ENCODE measurements at regions of chr15 and their contacts with region 1.

Region 1: GRCh38 chr15:40421246-40422157 is 15.9 kb downstream of the IVD start:
- DNase-seq: peak; percentile 59 to 84 (median 73)
- ATAC-seq: peak; percentile 97
- H3K4me3 ChIP-seq: peak overlapping the region; percentile 19
- H3K4me3 Mint-ChIP-seq: peak overlapping the region in 1 of 10 donors; percentile 4
- H3K27ac ChIP-seq: no peak overlapping the region
- H3K27ac Mint-ChIP-seq: peak overlapping the region in 1 of 9 donors; percentile 32
- H3K4me1 ChIP-seq: peaks cover 0 to 3% of the 10 kb centered on the region in 2 donors
- H3K4me1 Mint-ChIP-seq: peaks cover 0 to 7% (median 0%) of the 10 kb centered on the region in 7 donors
- H3K27me3 ChIP-seq: no peaks in the 10 kb centered on the region
- H3K27me3 Mint-ChIP-seq: no peaks in the 10 kb centered on the region

Region 2: DNA sequence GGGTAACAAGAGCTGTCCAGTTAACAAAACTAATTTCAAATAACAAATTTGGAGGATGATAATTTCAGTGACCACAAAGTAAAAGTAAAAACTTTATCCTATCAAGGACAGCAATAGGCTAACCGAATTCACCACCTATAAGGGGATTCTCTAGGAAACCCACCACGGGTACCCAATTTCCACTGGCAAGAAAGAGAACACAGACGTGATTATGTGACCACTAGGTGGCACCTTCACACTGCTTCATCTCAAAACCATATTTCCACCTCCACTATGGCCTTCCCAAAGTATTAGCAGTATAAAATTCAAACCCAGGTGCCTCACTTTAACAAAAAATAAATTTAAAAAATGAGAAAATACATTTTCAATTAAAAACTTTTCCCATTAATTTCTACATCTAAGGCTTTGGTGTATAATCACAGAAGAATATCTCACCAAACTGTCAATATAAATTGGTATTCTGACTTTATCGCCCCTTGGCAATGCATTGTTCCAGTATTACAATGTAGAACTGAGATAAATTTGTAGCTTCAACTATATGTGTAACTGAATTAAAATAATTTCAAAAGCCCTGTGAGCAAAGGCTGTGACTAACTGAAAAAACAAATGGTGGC is 735.4 kb before region 1 on chr15:
- CTCF ChIA-PET with region 1: no interaction called
- POLR2A ChIA-PET with region 1: no interaction called
- intact Hi-C with region 1: loop called in 1 of 2 experiments (anchors 5 kb)
- DNase-seq: peak in 6 of 9 donors; percentile 10 to 43 (median 33)
- ATAC-seq: peak; percentile 51
- H3K4me3 ChIP-seq: no peak overlapping the region
- H3K4me3 Mint-ChIP-seq: no peak overlapping the region
- H3K27ac ChIP-seq: no peak overlapping the region
- H3K27ac Mint-ChIP-seq: no peak overlapping the region
- H3K4me1 ChIP-seq: no peaks in the 10 kb centered on the region
- H3K4me1 Mint-ChIP-seq: peaks cover 0 to 5% (median 0%) of the 10 kb centered on the region in 7 donors
- H3K27me3 ChIP-seq: no peaks in the 10 kb centered on the region
- H3K27me3 Mint-ChIP-seq: peaks cover 0 to 15% (median 0%) of the 10 kb centered on the region in 5 donors

Region 3: GRCh38 chr15:40274350-40275274 is 146.9 kb before region 1 on chr15:
- CTCF ChIA-PET with region 1: interaction called, 4 read pairs
- POLR2A ChIA-PET with region 1: no interaction called
- intact Hi-C with region 1: loop called in 1 of 2 experiments (anchors 1 kb)
- DNase-seq: peak; percentile 71 to 95 (median 88)
- ATAC-seq: peak; percentile 94
- H3K4me3 ChIP-seq: no peak overlapping the region
- H3K4me3 Mint-ChIP-seq: peak overlapping the region in 1 of 10 donors; percentile 45
- H3K27ac ChIP-seq: no peak overlapping the region
- H3K27ac Mint-ChIP-seq: peak overlapping the region in 6 of 9 donors; percentile 17 to 70 (median 50)
- H3K4me1 ChIP-seq: peaks cover 0 to 3% of the 10 kb centered on the region in 2 donors
- H3K4me1 Mint-ChIP-seq: peaks cover 0 to 17% (median 5%) of the 10 kb centered on the region in 7 donors
- H3K27me3 ChIP-seq: no peaks in the 10 kb centered on the region
- H3K27me3 Mint-ChIP-seq: peaks cover 12 to 29% (median 16%) of the 10 kb centered on the region in 5 donors

Region 4: GRCh38 chr15:40323239-40323952 is 98.1 kb before region 1 on chr15 and contains the start of gene INAFM2:
- CTCF ChIA-PET with region 1: interaction called, 6 read pairs
- POLR2A ChIA-PET with region 1: no interaction called
- intact Hi-C with region 1: loop called (anchors 1 kb)
- DNase-seq: peak; percentile 77 to 91 (median 89)
- ATAC-seq: peak; percentile 95
- H3K4me3 ChIP-seq: peak within 1 kb of the TSS; percentile 34
- H3K4me3 Mint-ChIP-seq: peak within 1 kb of the TSS; percentile 69 to 89 (median 84)
- H3K27ac ChIP-seq: peak within 1 kb of the TSS; percentile 66
- H3K27ac Mint-ChIP-seq: peak within 1 kb of the TSS in 8 of 9 donors; percentile 56 to 86 (median 80)
- H3K4me1 ChIP-seq: peaks cover 15% of the 10 kb centered on the region in 2 donors
- H3K4me1 Mint-ChIP-seq: peaks cover 19 to 51% (median 43%) of the 10 kb centered on the region in 7 donors
- H3K27me3 ChIP-seq: no peaks in the 10 kb centered on the region
- H3K27me3 Mint-ChIP-seq: peaks cover 0 to 23% (median 0%) of the 10 kb centered on the region in 5 donors
- total RNA-seq, gene INAFM2: 7.1 to 21.2 (median 12.7) TPM

Region 5: DNA sequence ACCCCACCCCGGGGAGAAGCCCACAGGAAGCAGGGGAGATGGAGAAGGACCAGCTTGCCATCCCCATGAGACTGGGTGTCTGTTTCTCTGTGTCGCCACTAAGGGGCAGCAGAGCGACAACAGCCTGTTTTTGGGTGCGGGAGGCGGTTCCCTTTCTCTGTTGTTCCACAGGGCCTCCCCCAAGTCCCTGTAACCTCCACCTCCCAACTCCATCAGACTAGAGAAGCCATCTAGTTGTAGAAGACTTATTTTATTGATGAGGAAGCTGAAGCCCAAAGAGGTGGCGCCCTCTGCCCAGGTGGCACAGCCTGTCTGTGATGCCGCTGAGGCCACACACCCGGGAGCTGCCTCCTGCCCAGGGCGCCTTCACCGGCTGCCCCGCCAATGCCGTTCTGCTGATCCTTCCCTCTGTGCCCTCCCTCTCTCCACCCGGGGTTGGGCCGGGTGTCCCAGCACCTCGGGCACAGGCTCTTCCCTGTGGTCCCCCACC is 76.8 kb before region 1 on chr15:
- CTCF ChIA-PET with region 1: interaction called, 107 read pairs
- POLR2A ChIA-PET with region 1: interaction called, 3 read pairs
- intact Hi-C with region 1: loop called (anchors 1 kb)
- DNase-seq: peak; percentile 49 to 75 (median 65)
- ATAC-seq: peak; percentile 85
- H3K4me3 ChIP-seq: no peak overlapping the region
- H3K4me3 Mint-ChIP-seq: no peak overlapping the region
- H3K27ac ChIP-seq: no peak overlapping the region
- H3K27ac Mint-ChIP-seq: no peak overlapping the region
- H3K4me1 ChIP-seq: no peaks in the 10 kb centered on the region
- H3K4me1 Mint-ChIP-seq: peaks cover 0 to 8% (median 0%) of the 10 kb centered on the region in 7 donors
- H3K27me3 ChIP-seq: no peaks in the 10 kb centered on the region
- H3K27me3 Mint-ChIP-seq: no peaks in the 10 kb centered on the region

Region 6: GRCh38 chr15:40382580-40383456 is 38.7 kb before region 1 on chr15 and contains the start of gene KNSTRN:
- CTCF ChIA-PET with region 1: no interaction called
- POLR2A ChIA-PET with region 1: no interaction called
- intact Hi-C with region 1: loop called in 1 of 2 experiments (anchors 5 kb)
- DNase-seq: peak; percentile 78 to 93 (median 91)
- ATAC-seq: peak; percentile 100
- H3K4me3 ChIP-seq: peak within 1 kb of the TSS; percentile 70
- H3K4me3 Mint-ChIP-seq: peak within 1 kb of the TSS; percentile 92 to 99 (median 98)
- H3K27ac ChIP-seq: peak within 1 kb of the TSS; percentile 65
- H3K27ac Mint-ChIP-seq: peak within 1 kb of the TSS; percentile 63 to 95 (median 85)
- H3K4me1 ChIP-seq: peaks cover 6 to 7% of the 10 kb centered on the region in 2 donors
- H3K4me1 Mint-ChIP-seq: peaks cover 14 to 26% (median 22%) of the 10 kb centered on the region in 7 donors
- H3K27me3 ChIP-seq: no peaks in the 10 kb centered on the region
- H3K27me3 Mint-ChIP-seq: peaks cover 0 to 13% (median 0%) of the 10 kb centered on the region in 5 donors
- total RNA-seq, gene KNSTRN: 3.7 to 39.6 (median 6.2) TPM

Region 7: DNA sequence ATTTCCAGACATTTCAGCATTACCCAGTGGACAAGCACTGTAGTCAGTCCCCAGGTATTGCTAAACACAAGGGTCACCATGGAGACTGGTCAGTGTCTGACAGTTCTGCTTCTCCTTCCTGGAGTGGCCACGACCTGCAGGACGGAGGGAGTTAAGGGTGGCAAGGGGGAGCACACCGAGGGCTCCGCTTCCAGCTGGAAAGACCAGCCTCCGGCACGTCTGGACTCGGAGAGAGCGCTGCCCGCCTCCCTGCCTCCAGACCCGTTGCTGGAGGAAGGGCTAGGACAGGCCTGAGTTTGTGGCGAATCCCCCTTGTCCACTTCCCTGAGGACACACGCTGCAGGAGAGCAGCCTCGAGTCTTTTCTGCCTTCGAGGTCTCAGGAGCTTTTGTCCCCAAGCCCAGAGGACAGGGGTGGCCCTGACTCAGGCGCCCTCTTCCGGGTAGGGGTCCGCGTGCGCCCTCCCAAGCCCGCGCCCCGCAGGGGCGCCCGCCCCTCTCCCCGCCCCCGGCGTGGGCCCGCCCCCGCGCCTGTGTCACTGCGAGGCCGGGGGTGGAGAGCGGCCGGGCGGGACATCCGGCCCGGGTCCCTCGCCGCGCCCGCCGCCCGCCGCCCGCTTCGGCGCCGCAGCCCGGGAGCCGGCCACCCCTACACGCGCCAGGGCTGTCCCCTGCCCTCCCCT is 49.1 kb after region 1 on chr15 and contains the start of gene CHST14:
- CTCF ChIA-PET with region 1: no interaction called
- POLR2A ChIA-PET with region 1: no interaction called
- intact Hi-C with region 1: no loop called
- DNase-seq: peak; percentile 24 to 68 (median 53)
- ATAC-seq: peak; percentile 88
- H3K4me3 ChIP-seq: peak within 1 kb of the TSS; percentile 89
- H3K4me3 Mint-ChIP-seq: peak within 1 kb of the TSS; percentile 90 to 96 (median 92)
- H3K27ac ChIP-seq: peak within 1 kb of the TSS; percentile 81
- H3K27ac Mint-ChIP-seq: peak within 1 kb of the TSS; percentile 80 to 95 (median 87)
- H3K4me1 ChIP-seq: peaks cover 8 to 16% of the 10 kb centered on the region in 2 donors
- H3K4me1 Mint-ChIP-seq: peaks cover 15 to 47% (median 37%) of the 10 kb centered on the region in 7 donors
- H3K27me3 ChIP-seq: no peaks in the 10 kb centered on the region
- H3K27me3 Mint-ChIP-seq: peaks cover 0 to 3% (median 0%) of the 10 kb centered on the region in 5 donors
- total RNA-seq, gene CHST14: 7.3 to 12.5 (median 10.8) TPM

Measured in naive thymus-derived CD4-positive, alpha-beta T cell (primary cell).